ENCODE measurements at regions of chr5 and their contacts with region 1.

Region 1: GRCh38 chr5:58447226-58447625 is 12.7 kb downstream of the PLK2 start:
- DNase-seq: no peak
- ATAC-seq: no peak
- H3K4me3 ChIP-seq: no peak overlapping the region
- H3K27ac ChIP-seq: no peak overlapping the region
- H3K4me1 ChIP-seq: no peaks in the 10 kb centered on the region
- H3K27me3 ChIP-seq: no peaks in the 10 kb centered on the region
- CTCF ChIP-seq: no peak
- POLR2A ChIP-seq: no peak

Region 2: GRCh38 chr5:58318468-58318867 is 128.8 kb before region 1 on chr5:
- intact Hi-C with region 1: no loop called
- DNase-seq: no peak
- ATAC-seq: no peak
- H3K4me3 ChIP-seq: no peak overlapping the region
- H3K27ac ChIP-seq: no peak overlapping the region
- H3K4me1 ChIP-seq: peaks cover 0 to 7% (median 0%) of the 10 kb centered on the region in 12 donors
- H3K27me3 ChIP-seq: no peaks in the 10 kb centered on the region
- CTCF ChIP-seq: no peak
- POLR2A ChIP-seq: no peak

Region 3: DNA sequence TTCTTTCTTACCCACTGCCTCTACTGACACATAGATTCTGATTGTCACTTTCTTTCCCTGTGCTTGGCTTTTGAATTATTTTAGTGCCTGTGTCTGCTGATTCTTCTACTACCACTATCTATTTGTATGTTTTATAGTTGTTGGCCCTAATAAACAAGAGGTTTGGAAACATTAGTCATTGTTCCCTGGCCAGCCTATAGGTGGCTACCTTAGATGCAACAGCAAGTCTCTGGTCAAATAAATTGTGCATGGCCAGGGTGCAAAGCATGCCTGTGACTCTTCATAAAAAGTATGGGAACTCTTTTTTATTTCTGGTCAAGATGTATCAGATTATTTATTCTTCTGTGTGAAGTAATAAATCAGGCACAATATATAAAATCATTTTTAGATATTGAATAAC is 111.7 kb before region 1 on chr5:
- intact Hi-C with region 1: loop called in 2 of 10 experiments (anchors 10 kb)
- DNase-seq: no peak
- ATAC-seq: no peak
- H3K4me3 ChIP-seq: no peak overlapping the region
- H3K27ac ChIP-seq: no peak overlapping the region
- H3K4me1 ChIP-seq: no peaks in the 10 kb centered on the region
- H3K27me3 ChIP-seq: no peaks in the 10 kb centered on the region
- CTCF ChIP-seq: peak in 1 of 12 donors; percentile 6
- POLR2A ChIP-seq: no peak

Region 4: DNA sequence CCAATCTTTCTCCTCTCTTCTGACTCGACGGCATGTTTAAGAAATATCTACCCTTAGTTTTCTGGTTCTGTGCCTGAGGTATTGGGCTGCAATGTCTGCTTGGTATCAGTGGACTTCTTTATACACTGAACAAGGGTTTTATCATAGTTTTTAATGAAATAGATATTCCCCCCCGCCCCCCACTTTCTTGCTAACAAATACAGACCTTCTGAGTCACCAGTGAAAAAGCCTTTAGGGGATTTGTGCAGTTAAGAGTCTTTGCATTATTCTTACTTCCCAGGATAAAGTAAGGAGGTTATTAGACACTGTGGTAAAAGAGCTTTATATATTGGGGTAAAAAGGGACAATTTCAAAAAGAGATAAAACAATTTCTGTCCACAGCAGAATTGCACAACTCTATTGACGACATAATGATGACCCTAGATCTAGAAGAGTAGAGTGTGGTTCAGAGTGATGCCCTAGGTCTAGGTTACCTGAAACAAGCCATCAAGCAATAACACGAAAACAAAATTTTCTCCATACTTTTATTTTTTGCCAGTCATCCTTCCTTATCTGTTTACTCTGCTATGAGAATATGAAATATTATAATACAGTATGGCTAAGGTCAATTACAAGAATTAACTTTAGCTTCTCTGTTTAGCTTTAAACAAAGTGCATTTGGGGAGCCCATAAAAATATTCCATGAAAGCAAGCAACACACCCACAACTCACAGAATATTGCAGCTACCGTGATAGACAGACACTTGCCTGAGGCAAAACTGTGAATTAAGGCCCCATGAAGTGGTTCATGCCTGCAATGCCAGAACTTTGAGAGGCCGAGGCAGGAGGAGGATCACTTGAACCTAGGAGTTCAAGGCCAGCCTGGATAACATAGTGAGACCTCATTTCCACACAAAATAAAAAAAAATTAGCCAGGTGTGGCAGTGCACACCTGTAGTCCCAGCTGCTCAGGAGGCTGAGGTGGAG is 97.9 kb before region 1 on chr5:
- intact Hi-C with region 1: loop called in 1 of 10 experiments (anchors 10 kb)
- DNase-seq: no peak
- ATAC-seq: no peak
- H3K4me3 ChIP-seq: no peak overlapping the region
- H3K27ac ChIP-seq: no peak overlapping the region
- H3K4me1 ChIP-seq: no peaks in the 10 kb centered on the region
- H3K27me3 ChIP-seq: no peaks in the 10 kb centered on the region
- CTCF ChIP-seq: no peak
- POLR2A ChIP-seq: no peak